Adrenal gland (tissue), 19 donors: ENCODE measurements at regions of chr17 and their contacts with region 1.

Region 1: DNA sequence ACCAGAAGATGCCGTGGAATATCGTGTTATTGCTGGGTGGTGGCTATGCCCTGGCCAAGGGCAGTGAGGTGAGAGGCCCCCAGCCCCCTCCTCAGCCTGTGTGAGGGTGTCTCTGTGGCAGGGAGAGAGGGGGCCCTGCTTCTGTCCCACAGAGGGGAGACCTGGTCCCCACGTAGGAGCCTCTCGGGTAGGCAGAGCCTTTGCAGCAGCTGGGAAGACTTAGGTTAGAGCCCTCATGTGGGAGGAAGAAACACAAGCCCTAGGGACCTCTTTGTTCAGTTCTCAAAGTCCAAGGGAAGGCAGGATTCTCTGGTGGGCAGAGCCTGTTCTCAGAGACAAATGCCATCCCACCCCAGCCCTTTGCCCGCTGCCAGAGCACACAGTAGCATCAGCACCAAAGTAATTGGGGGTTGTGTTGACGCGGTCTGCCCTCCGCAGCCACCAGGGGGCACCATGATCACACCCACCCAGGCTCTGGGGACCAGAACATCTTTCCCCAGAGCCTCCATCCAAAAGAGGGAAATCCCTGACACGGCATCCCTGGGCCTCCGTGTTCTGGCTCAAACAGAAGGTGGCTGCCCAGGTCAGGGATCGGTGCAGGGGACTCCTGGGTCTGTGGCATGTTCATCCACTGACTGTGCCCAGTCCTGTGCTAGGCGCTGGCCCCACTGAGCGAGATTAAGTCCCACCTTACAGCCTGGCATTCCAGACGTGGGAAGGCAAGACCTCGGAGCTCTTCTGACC is 11.5 kb upstream of the FOXN1 start:
- DNase-seq: peak; percentile 59 to 84 (median 76)
- H3K4me3 ChIP-seq: no peak overlapping the region
- H3K27ac ChIP-seq: no peak overlapping the region
- H3K4me1 ChIP-seq: no peaks in the 10 kb centered on the region
- H3K27me3 ChIP-seq: peaks cover 7% of the 10 kb centered on the region
- CTCF ChIP-seq: peak; percentile 76 to 89 (median 83)
- POLR2A ChIP-seq: no peak

Region 2: GRCh38 chr17:28532991-28533807 is 38.6 kb after region 1 on chr17:
- intact Hi-C with region 1: loop called in 1 of 2 experiments (anchors 5 kb)
- DNase-seq: no peak
- H3K4me3 ChIP-seq: no peak overlapping the region
- H3K27ac ChIP-seq: no peak overlapping the region
- H3K4me1 ChIP-seq: no peaks in the 10 kb centered on the region
- H3K27me3 ChIP-seq: peaks cover 5% of the 10 kb centered on the region
- CTCF ChIP-seq: no peak
- POLR2A ChIP-seq: no peak

Region 3: GRCh38 chr17:28540231-28540630 is 45.6 kb after region 1 on chr17:
- intact Hi-C with region 1: loop called in 1 of 2 experiments (anchors 2 kb)
- DNase-seq: no peak
- H3K4me3 ChIP-seq: no peak overlapping the region
- H3K27ac ChIP-seq: no peak overlapping the region
- H3K4me1 ChIP-seq: no peaks in the 10 kb centered on the region
- H3K27me3 ChIP-seq: no peaks in the 10 kb centered on the region
- CTCF ChIP-seq: no peak
- POLR2A ChIP-seq: no peak

Region 4: DNA sequence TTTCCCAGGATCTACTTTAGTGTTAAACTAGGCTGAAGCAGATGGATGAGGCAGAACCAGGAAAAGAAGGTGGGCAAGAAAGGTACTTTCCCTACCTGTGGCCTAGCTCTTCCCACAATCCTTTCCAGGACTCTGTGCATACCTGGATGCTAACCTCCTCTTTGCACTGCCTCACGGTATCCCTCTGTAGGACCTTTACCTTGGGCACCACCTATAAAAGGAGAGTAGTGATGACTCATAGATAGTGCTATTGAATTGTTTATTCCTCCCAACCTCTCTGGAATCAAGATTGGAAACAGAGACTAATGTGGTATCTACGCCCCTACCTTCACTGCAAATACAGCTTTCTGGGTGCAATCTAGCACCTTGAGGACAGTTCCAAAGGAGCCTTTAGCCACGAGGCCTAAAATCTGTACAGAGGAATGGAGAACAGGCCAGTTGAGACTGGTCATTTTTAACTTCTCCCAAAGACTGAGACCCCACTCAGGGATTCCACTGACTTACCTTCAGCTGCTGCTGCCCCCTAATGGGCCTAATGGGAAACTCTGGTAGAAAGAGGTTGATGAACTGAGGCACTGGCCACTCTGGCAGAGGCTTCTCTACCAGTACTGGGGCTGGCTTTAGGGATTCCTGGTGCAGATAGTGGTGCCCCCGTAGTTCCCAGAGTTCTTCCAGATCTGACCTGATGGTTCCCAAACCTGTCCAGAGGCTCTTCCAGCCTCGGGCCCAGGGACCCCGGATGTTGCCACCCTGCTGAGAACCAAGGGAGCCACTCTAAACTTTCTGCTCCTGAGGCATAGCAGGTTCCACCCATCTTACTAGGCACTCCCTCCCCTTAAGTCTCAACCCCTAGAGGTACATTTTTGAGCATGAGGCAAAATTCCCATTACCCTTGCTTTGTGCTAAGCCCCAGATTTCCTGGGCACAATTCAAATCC is 118.6 kb after region 1 on chr17:
- intact Hi-C with region 1: loop called (anchors 2 to 10 kb)
- DNase-seq: peak in 6 of 7 donors; percentile 28 to 69 (median 40)
- H3K4me3 ChIP-seq: no peak overlapping the region
- H3K27ac ChIP-seq: peak overlapping the region in 1 of 5 donors; percentile 14
- H3K4me1 ChIP-seq: no peaks in the 10 kb centered on the region
- H3K27me3 ChIP-seq: no peaks in the 10 kb centered on the region
- CTCF ChIP-seq: peak; percentile 27 to 66 (median 56)
- POLR2A ChIP-seq: no peak